ENCODE measurements at regions of chr13 and their contacts with region 1.

Region 1: GRCh38 chr13:30114571-30115256 is 192.6 kb downstream of the KATNAL1 start:
- DNase-seq: peak; percentile 91 to 96
- H3K4me3 ChIP-seq: peak overlapping the region; percentile 64
- H3K4me3 Mint-ChIP-seq: peak overlapping the region; percentile 95
- H3K27ac Mint-ChIP-seq: peak overlapping the region; percentile 96
- H3K4me1 ChIP-seq: peaks cover 31% of the 10 kb centered on the region
- H3K4me1 Mint-ChIP-seq: peaks cover 33% of the 10 kb centered on the region
- H3K27me3 ChIP-seq: no peaks in the 10 kb centered on the region
- H3K27me3 Mint-ChIP-seq: no peaks in the 10 kb centered on the region
- CTCF ChIP-seq: peak; percentile 93 to 96

Region 2: DNA sequence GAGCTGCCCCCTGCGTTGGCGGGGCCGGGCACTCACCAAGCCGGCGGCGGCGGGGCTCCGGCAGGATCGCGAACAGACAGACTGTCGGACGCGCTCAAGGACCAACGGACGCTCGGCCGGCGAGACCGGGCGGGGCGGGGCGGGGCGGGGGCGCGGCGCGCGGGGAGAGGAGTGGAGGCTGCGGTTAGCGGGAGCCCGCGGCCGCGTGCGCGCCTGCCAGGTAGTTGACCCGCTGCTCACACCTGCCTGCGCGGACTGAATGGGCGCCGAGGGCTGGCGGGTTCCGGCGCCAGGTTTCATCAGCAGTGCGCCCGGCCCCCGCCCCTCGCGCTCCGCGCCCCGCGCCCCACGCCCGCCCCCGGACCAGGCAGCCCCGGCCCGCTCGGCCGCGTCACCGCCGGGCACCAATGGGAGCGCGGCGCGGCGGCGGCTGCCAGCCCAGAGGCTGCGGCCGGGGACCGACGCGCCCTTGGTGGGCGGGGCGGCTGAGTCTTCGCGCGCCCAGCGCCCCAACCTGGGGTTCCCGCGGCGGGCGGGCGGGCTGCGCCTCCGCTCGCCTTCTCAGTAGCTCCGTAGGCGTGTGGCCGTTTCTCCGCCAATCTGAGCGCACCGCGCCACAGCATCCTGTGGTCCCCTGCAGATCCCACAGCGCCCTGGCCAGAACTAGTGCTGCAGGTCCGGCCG is 519.2 kb before region 1 on chr13 and contains the start of gene SLC7A1:
- CTCF ChIA-PET with region 1: no interaction called
- POLR2A ChIA-PET with region 1: no interaction called
- intact Hi-C with region 1: loop called (anchors 10 kb)
- DNase-seq: peak; percentile 88 to 94
- H3K4me3 ChIP-seq: peak within 1 kb of the TSS; percentile 92
- H3K4me3 Mint-ChIP-seq: peak within 1 kb of the TSS; percentile 88
- H3K27ac Mint-ChIP-seq: peak within 1 kb of the TSS; percentile 91
- H3K4me1 ChIP-seq: peaks cover 11% of the 10 kb centered on the region
- H3K4me1 Mint-ChIP-seq: peaks cover 21% of the 10 kb centered on the region
- H3K27me3 ChIP-seq: 0 out of 2 replicates have a peak, but pooled peaks cover 1% of the 10 kb centered on the region
- H3K27me3 Mint-ChIP-seq: peaks cover 2% of the 10 kb centered on the region
- CTCF ChIP-seq: peak in 1 of 2 experiments; percentile 20
- total RNA-seq, gene SLC7A1: 164 and 180 TPM in 2 replicates

Region 3: GRCh38 chr13:29771247-29771646 is 343.5 kb before region 1 on chr13:
- CTCF ChIA-PET with region 1: interaction called, 32 read pairs
- POLR2A ChIA-PET with region 1: interaction called, 5 read pairs
- intact Hi-C with region 1: loop called (anchors 1 kb)
- DNase-seq: peak in 1 of 2 experiments; percentile 40
- H3K4me3 ChIP-seq: no peak overlapping the region
- H3K4me3 Mint-ChIP-seq: no peak overlapping the region
- H3K27ac Mint-ChIP-seq: no peak overlapping the region
- H3K4me1 ChIP-seq: no peaks in the 10 kb centered on the region
- H3K4me1 Mint-ChIP-seq: peaks cover 7% of the 10 kb centered on the region
- H3K27me3 ChIP-seq: no peaks in the 10 kb centered on the region
- H3K27me3 Mint-ChIP-seq: no peaks in the 10 kb centered on the region
- CTCF ChIP-seq: peak; percentile 39 to 59

Region 4: DNA sequence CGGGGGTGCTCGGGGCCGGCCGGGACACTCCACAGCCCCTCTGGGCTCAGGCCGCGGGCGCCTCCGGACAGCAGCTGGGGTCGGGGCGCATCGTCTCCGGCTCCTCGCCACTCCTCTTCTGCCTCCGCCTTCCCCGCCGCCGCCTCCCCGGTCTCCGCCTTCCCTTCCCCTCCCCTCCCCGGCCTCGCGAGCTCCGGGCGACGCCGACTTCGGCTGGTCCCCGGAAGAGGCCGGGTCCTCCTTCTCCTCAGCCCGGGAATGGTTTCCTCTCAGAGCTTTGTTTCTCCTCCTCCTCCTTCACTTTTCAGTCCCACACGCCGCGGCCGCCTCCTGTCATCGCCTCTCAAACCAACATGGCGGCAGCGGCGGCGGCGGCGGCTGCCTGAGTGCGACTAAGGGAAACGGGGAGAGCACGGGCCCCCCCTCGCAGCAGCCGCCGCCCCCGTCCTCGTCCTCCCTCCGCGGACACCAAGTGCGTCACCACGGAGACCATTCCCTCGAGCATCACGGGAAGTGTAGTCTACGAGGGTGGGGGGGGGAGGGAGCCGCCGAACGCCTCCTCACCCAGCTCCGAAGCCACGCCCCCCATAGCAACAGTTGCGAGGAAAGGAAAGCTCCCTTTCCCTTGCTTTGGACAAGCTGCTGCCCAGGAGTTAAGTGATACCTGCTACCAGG is 264.4 kb before region 1 on chr13 and contains the start of gene UBL3:
- CTCF ChIA-PET with region 1: interaction called, 8 read pairs
- POLR2A ChIA-PET with region 1: interaction called, 6 read pairs
- intact Hi-C with region 1: loop called (anchors 1 kb)
- DNase-seq: peak; percentile 95 to 98
- H3K4me3 ChIP-seq: peak within 1 kb of the TSS; percentile 58
- H3K4me3 Mint-ChIP-seq: peak within 1 kb of the TSS; percentile 92
- H3K27ac Mint-ChIP-seq: peak within 1 kb of the TSS; percentile 99
- H3K4me1 ChIP-seq: peaks cover 23% of the 10 kb centered on the region
- H3K4me1 Mint-ChIP-seq: peaks cover 24% of the 10 kb centered on the region
- H3K27me3 ChIP-seq: no peaks in the 10 kb centered on the region
- H3K27me3 Mint-ChIP-seq: no peaks in the 10 kb centered on the region
- CTCF ChIP-seq: no peak
- total RNA-seq, gene UBL3: 37.4 and 37.5 TPM in 2 replicates

Region 5: GRCh38 chr13:29978211-29978610 is 136.5 kb before region 1 on chr13:
- CTCF ChIA-PET with region 1: interaction called, 11 read pairs
- POLR2A ChIA-PET with region 1: no interaction called
- intact Hi-C with region 1: no loop called
- DNase-seq: no peak
- H3K4me3 ChIP-seq: no peak overlapping the region
- H3K4me3 Mint-ChIP-seq: no peak overlapping the region
- H3K27ac Mint-ChIP-seq: no peak overlapping the region
- H3K4me1 ChIP-seq: no peaks in the 10 kb centered on the region
- H3K4me1 Mint-ChIP-seq: no peaks in the 10 kb centered on the region
- H3K27me3 ChIP-seq: no peaks in the 10 kb centered on the region
- H3K27me3 Mint-ChIP-seq: no peaks in the 10 kb centered on the region
- CTCF ChIP-seq: no peak

Region 6: DNA sequence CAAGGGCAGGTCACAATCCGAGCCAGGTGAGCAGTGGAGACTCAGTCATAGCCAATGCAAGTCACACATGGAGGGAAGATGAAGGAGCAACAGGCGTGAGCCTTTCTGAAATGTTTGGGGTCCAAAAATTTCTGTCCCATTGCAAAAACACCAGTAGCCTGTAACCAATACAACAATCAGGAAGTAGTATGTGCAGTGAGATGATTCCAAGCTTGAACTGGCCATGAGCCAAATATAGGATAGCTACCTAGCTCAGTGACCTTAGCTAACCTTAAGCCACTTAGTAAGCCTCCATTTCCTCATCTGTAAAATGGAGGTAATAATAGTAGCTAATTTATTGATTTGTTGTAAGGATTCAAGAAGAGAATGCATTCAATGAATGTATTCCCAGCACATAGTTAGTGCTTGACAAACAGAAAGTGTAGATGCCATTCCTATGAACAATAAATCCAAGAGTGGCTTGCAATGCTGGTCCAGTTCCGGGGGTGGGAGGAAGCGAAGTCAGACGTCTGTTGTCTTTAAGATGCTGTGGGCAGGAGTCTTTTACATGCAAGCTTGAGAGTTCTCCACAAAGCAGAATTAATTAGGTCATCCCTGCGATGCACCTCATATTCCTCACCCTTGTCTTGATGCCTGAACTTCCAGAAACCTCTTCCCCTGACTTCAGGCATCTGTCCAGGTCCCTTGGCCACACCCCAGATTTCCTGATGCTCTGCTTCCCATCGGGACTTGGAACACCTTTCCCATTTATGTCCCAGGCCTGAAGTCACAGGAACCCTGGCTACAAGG is 68.6 kb before region 1 on chr13:
- CTCF ChIA-PET with region 1: interaction called, 14 read pairs
- POLR2A ChIA-PET with region 1: no interaction called
- intact Hi-C with region 1: loop called (anchors 1 kb)
- DNase-seq: no peak
- H3K4me3 ChIP-seq: no peak overlapping the region
- H3K4me3 Mint-ChIP-seq: no peak overlapping the region
- H3K27ac Mint-ChIP-seq: peak overlapping the region; percentile 54
- H3K4me1 ChIP-seq: peaks cover 19% of the 10 kb centered on the region
- H3K4me1 Mint-ChIP-seq: peaks cover 13% of the 10 kb centered on the region
- H3K27me3 ChIP-seq: no peaks in the 10 kb centered on the region
- H3K27me3 Mint-ChIP-seq: no peaks in the 10 kb centered on the region
- CTCF ChIP-seq: no peak

Region 7: GRCh38 chr13:30132623-30133553 is 18.2 kb after region 1 on chr13:
- CTCF ChIA-PET with region 1: interaction called, 11 read pairs
- POLR2A ChIA-PET with region 1: no interaction called
- intact Hi-C with region 1: no loop called
- DNase-seq: peak; percentile 94 to 96
- H3K4me3 ChIP-seq: no peak overlapping the region
- H3K4me3 Mint-ChIP-seq: no peak overlapping the region
- H3K27ac Mint-ChIP-seq: no peak overlapping the region
- H3K4me1 ChIP-seq: peaks cover 5% of the 10 kb centered on the region; the same call in 1 of the 2 replicates
- H3K4me1 Mint-ChIP-seq: peaks cover 12% of the 10 kb centered on the region
- H3K27me3 ChIP-seq: no peaks in the 10 kb centered on the region
- H3K27me3 Mint-ChIP-seq: no peaks in the 10 kb centered on the region
- CTCF ChIP-seq: peak; percentile 92 to 95

Region 8: DNA sequence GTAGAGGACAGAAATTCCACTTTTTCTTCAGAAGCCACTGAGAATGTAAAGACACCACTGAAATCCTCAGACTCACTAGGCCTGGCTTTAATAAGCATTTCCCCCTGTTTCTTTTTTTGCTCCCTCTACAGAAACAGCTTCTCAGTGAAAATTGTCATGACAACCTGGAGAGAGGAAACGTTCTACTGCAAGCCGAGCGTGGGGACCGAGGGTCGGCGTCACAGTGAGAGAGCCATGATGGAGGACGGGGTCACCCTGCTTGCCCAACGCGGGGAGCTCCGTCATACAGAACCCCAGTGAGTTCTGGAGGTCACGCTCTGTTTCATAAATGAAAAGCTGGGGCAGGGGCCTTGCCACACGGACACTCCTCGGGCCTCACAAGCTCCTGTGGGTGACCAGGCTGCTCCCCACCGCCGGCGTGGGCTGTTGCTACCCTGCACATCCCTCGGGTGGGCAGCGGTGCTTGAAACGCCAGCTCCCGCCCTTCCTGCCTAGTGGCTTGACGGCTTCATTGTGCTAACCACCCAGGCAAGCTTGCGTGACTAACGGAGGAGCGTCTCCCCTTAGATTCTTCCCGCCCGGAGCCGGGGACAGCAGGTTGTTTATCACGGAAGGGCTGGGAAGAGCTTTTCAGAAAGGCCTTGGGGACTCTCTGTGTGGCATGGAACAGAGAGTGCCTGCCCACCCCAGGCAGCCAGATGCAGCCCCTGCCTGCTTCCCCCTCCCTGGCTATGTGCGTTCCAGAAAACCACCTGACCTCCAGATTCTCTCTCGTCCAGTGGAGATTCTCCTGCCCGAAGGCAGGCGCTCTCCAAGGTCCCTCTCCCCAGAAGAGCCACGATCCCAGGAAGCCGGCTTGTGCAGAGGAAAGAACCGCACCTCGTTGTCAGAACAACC is 39.1 kb after region 1 on chr13:
- CTCF ChIA-PET with region 1: no interaction called
- POLR2A ChIA-PET with region 1: no interaction called
- intact Hi-C with region 1: no loop called
- DNase-seq: peak in 1 of 2 experiments; percentile 31
- H3K4me3 ChIP-seq: no peak overlapping the region
- H3K4me3 Mint-ChIP-seq: no peak overlapping the region
- H3K27ac Mint-ChIP-seq: no peak overlapping the region
- H3K4me1 ChIP-seq: no peaks in the 10 kb centered on the region
- H3K4me1 Mint-ChIP-seq: no peaks in the 10 kb centered on the region
- H3K27me3 ChIP-seq: no peaks in the 10 kb centered on the region
- H3K27me3 Mint-ChIP-seq: peaks cover 3% of the 10 kb centered on the region
- CTCF ChIP-seq: no peak

Region 9: GRCh38 chr13:30408319-30409101 is 293.8 kb after region 1 on chr13:
- CTCF ChIA-PET with region 1: no interaction called
- POLR2A ChIA-PET with region 1: no interaction called
- intact Hi-C with region 1: no loop called
- DNase-seq: peak; percentile 95 to 96
- H3K4me3 ChIP-seq: peak overlapping the region; percentile 19
- H3K4me3 Mint-ChIP-seq: peak overlapping the region; percentile 62
- H3K27ac Mint-ChIP-seq: peak overlapping the region; percentile 46
- H3K4me1 ChIP-seq: 0 out of 2 replicates have a peak, but pooled peaks cover 5% of the 10 kb centered on the region
- H3K4me1 Mint-ChIP-seq: no peaks in the 10 kb centered on the region
- H3K27me3 ChIP-seq: no peaks in the 10 kb centered on the region
- H3K27me3 Mint-ChIP-seq: no peaks in the 10 kb centered on the region
- CTCF ChIP-seq: peak; percentile 76 to 82

Measured in Caco-2 (cell line).